Cardiac septum (tissue), 1 donor: ENCODE measurements at regions of chr17 and their contacts with region 1.

Region 1: GRCh38 chr17:35486920-35487732 is 38.6 kb upstream of the SLFN13 start:
- DNase-seq: peak; percentile 82

Region 2: DNA sequence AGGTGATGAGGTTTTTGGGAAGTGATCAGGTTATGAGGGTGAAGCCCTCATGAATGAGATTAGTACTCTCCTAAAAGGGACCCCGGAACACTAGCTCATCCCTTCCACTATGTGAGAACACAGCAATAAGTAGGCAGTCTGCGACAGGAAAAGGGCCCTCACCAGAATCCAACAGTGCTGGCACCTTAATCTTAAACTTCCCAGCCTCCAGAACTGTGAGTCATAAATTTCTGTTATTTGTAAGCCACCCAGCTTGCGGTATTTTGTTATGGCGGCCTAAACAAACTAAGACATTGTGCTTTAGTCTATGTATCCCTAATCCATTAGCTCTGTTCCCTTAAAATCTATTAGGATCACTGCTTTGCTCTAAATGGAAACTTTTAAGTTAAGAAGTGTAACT is 63.4 kb before region 1 on chr17:
- intact Hi-C with region 1: no loop called
- DNase-seq: no peak

Region 3: GRCh38 chr17:35448214-35448898 is 38.8 kb before region 1 on chr17 and contains the start of gene SLFN13:
- intact Hi-C with region 1: loop called (anchors 5 kb)
- DNase-seq: peak; percentile 93
- total RNA-seq, gene SLFN13: 4.8 TPM